ENCODE measurements at regions of chr9 and their contacts with region 1.

Region 1: DNA sequence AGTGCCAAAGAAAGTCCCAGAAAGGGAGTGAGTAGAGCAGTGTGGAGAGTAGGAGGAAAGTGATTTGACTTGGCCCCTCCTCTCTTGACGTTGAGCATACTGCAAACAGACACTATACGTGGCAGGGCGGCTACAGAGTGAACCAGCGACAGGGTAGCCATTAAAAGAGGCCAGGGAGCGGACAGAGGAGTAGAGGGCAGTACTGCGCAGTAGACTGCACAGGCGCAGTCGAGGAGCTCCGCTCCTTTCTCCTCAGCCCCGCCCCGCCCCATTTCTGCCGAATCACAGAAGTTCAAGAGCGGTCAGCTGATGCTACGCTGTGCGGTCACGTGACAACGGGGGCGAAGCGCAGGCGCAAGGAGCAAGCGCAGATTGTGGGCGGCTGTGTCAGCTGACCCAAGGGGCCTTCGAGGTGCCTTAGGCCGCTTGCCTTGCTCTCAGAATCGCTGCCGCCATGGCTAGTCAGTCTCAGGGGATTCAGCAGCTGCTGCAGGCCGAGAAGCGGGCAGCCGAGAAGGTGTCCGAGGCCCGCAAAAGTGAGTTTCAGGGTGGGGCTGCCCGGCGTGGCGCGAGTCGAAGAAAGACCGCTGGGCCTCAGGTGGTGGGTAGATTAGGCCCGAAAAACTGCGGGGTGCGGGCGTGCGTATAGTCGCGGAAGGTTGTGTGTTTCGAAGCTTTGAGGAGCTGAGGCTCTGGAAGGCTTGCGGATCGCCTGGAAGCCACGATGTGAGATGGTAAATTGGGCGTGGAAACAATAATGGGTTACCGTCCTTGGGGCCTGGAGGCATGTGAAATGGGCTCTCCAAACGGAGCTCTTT is at the start of gene ATP6V1G1:
- DNase-seq: peak; percentile 96
- ATAC-seq: peak; percentile 93
- H3K4me3 Mint-ChIP-seq: peak within 1 kb of the TSS; percentile 99
- H3K27ac Mint-ChIP-seq: peak within 1 kb of the TSS; percentile 99
- H3K4me1 Mint-ChIP-seq: peaks cover 53% of the 10 kb centered on the region
- H3K27me3 Mint-ChIP-seq: no peaks in the 10 kb centered on the region
- CTCF ChIP-seq: no peak
- total RNA-seq, gene ATP6V1G1: 68.4 and 70.2 TPM in 2 replicates

Region 2: DNA sequence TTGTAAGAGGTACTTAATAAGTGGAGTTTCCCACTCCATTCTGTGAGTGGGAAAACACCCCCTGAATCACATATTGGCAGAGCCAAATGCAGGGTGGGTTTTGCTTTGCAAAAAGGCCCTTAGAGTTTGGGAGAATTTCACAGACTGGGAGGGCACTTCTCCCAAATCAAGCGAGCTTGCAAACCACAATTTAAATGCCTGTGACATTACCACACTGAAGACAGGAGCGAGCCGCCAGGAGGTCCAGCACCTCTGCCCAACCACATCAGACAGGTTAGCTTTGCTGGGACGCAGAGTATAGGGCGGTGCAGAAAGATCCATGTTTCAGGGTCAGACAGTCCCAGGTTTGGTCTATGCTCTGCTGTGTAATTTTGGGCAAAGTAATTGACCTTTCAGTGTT is 1188.8 kb before region 1 on chr9:
- CTCF ChIA-PET with region 1: no interaction called
- POLR2A ChIA-PET with region 1: no interaction called
- intact Hi-C with region 1: no loop called
- DNase-seq: no peak
- ATAC-seq: no peak
- H3K4me3 Mint-ChIP-seq: no peak overlapping the region
- H3K27ac Mint-ChIP-seq: no peak overlapping the region
- H3K4me1 Mint-ChIP-seq: peaks cover 17% of the 10 kb centered on the region
- H3K27me3 Mint-ChIP-seq: no peaks in the 10 kb centered on the region
- CTCF ChIP-seq: no peak

Region 3: GRCh38 chr9:114405294-114406034 is 182.1 kb before region 1 on chr9:
- CTCF ChIA-PET with region 1: interaction called, 21 read pairs
- POLR2A ChIA-PET with region 1: interaction called, 5 read pairs
- intact Hi-C with region 1: loop called (anchors 1 kb)
- DNase-seq: peak; percentile 62
- ATAC-seq: peak; percentile 99
- H3K4me3 Mint-ChIP-seq: no peak overlapping the region
- H3K27ac Mint-ChIP-seq: no peak overlapping the region
- H3K4me1 Mint-ChIP-seq: peaks cover 6% of the 10 kb centered on the region
- H3K27me3 Mint-ChIP-seq: no peaks in the 10 kb centered on the region
- CTCF ChIP-seq: peak; percentile 29

Region 4: DNA sequence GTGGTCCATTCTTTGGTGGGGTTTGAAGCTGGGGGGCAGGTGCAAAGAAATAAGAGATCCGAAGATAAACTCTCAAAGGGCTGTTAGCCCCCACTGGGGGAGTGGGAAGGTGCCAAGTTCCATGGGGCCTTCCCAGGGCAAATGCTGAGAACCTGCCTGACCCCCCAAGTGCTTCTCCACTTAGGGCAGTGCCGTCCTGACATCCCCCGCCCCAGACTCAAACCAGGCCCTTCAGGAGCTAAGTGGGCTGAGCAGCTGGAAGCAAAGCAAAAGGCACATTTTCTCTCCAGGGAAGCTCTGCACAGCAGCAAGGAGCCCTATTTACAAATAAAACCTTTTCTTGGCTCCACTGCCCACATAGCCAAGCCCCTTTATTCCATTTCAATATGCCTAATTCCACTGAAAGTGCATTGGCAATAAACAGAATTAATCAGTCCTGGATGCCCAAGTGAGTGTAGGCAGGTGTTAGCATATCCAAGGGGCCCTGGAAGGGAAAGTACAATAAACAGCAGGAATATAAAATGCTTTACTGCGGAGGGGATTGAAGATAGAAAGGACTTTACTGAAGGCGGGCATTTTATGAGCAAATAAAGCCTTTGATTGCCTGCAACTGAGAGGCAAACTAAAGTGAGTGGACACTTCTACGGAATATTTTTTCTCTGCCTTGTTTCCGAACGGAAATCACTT is 126.9 kb before region 1 on chr9:
- CTCF ChIA-PET with region 1: no interaction called
- POLR2A ChIA-PET with region 1: no interaction called
- intact Hi-C with region 1: no loop called
- DNase-seq: no peak
- ATAC-seq: no peak
- H3K4me3 Mint-ChIP-seq: no peak overlapping the region
- H3K27ac Mint-ChIP-seq: no peak overlapping the region
- H3K4me1 Mint-ChIP-seq: peaks cover 15% of the 10 kb centered on the region
- H3K27me3 Mint-ChIP-seq: no peaks in the 10 kb centered on the region
- CTCF ChIP-seq: no peak

Region 5: GRCh38 chr9:114487607-114488300 is 99.8 kb before region 1 on chr9:
- CTCF ChIA-PET with region 1: interaction called, 3 read pairs
- POLR2A ChIA-PET with region 1: interaction called, 3 read pairs
- intact Hi-C with region 1: loop called (anchors 1 kb)
- DNase-seq: no peak
- ATAC-seq: peak; percentile 85
- H3K4me3 Mint-ChIP-seq: no peak overlapping the region
- H3K27ac Mint-ChIP-seq: no peak overlapping the region
- H3K4me1 Mint-ChIP-seq: peaks cover 39% of the 10 kb centered on the region
- H3K27me3 Mint-ChIP-seq: no peaks in the 10 kb centered on the region
- CTCF ChIP-seq: peak; percentile 41

Region 6: DNA sequence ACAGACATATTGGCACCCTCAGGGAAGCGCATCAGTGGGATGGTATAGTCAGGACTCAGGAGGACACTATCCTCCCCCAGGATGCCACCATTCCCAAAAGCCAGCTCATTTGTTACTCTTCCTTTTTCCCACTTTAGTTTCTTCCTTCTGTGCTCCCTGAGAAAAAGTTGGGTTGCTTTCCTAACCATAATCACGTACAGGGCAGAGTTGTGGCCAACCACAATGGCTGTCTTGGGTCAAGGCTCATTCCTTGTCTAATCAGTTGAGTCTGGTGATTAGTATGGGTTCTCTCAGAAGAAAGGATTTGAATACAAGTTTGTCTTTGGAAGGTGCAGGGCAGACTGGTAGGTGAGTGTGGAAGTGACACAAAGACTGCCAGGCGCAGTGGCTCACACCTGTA is 26.6 kb before region 1 on chr9:
- CTCF ChIA-PET with region 1: interaction called, 5 read pairs
- POLR2A ChIA-PET with region 1: interaction called, 30 read pairs
- intact Hi-C with region 1: loop called (anchors 1 kb)
- DNase-seq: no peak
- ATAC-seq: no peak
- H3K4me3 Mint-ChIP-seq: no peak overlapping the region
- H3K27ac Mint-ChIP-seq: no peak overlapping the region
- H3K4me1 Mint-ChIP-seq: peaks cover 51% of the 10 kb centered on the region
- H3K27me3 Mint-ChIP-seq: no peaks in the 10 kb centered on the region
- CTCF ChIP-seq: no peak

Region 7: DNA sequence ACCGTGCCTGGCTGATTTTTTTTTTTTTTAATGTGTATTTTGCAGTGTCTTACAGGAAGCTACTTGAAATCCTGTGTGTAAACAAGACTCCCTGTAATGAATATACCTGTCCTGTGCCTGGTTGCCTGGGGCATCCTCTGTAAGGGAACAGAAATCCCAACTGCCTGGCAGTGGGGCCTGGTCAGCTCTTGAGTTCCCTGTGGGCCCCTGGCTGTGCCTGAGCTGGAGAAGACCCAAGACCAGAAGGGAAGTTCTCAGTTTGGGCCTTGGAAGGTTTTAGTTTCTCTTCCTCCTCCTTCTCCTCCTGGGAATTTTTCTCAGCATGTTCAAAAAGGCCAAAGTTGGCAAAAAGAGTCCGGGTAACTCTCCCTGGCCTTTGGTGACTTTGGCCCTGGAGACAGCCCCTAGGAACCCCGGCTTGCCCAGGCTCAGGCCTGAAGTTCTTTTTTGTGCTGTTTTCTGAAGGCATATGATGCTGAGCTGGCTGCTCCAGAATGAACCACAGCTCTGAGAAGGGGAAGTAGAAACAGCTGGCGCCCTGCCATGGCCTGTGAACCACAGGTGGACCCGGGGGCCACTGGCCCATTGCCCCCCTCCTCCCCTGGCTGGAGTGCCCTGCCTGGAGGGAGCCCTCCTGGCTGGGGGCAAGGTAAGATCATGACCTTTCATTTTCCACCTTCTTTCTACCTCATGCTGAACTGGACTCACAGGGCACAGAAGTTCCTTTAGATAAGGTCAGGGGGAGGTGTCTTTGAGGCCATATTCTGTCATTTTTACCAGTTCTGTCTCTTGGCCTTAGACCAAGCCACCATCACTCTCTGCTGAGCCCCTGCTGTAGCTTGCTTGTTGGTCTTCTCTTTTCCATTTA is 29.3 kb after region 1 on chr9:
- CTCF ChIA-PET with region 1: interaction called, 21 read pairs
- POLR2A ChIA-PET with region 1: interaction called, 161 read pairs
- intact Hi-C with region 1: loop called (anchors 1 kb)
- DNase-seq: peak; percentile 73
- ATAC-seq: peak; percentile 76
- H3K4me3 Mint-ChIP-seq: peak overlapping the region; percentile 74
- H3K27ac Mint-ChIP-seq: peak overlapping the region; percentile 98
- H3K4me1 Mint-ChIP-seq: peaks cover 83% of the 10 kb centered on the region
- H3K27me3 Mint-ChIP-seq: no peaks in the 10 kb centered on the region
- CTCF ChIP-seq: no peak

Region 8: GRCh38 chr9:114836769-114837168 is 249.2 kb after region 1 on chr9:
- CTCF ChIA-PET with region 1: no interaction called
- POLR2A ChIA-PET with region 1: no interaction called
- intact Hi-C with region 1: no loop called
- DNase-seq: no peak
- ATAC-seq: no peak
- H3K4me3 Mint-ChIP-seq: no peak overlapping the region
- H3K27ac Mint-ChIP-seq: no peak overlapping the region
- H3K4me1 Mint-ChIP-seq: no peaks in the 10 kb centered on the region
- H3K27me3 Mint-ChIP-seq: peaks cover 33% of the 10 kb centered on the region
- CTCF ChIP-seq: no peak

Region 9: DNA sequence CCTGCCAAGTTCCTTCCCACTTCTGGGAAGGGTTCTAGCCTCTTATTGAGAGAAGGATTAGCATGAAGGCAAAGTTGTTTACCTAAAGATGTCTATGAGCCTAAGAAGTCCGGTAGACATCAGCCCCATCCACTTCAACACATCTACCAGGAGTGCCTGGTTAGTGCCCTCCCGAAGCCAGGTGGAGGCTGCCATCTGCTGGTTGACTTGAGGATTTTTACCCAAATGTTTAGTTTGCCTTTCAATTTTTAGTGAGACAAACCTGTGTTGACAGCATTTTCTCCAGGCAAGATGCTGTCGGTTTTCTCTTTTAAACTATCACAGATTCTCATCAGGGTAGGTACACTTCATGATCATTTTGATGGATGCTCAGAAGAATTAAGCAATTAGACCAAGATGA is 426.4 kb after region 1 on chr9:
- CTCF ChIA-PET with region 1: no interaction called
- POLR2A ChIA-PET with region 1: no interaction called
- intact Hi-C with region 1: loop called (anchors 1 kb)
- DNase-seq: peak; percentile 46
- ATAC-seq: peak; percentile 79
- H3K4me3 Mint-ChIP-seq: no peak overlapping the region
- H3K27ac Mint-ChIP-seq: no peak overlapping the region
- H3K4me1 Mint-ChIP-seq: peaks cover 5% of the 10 kb centered on the region
- H3K27me3 Mint-ChIP-seq: peaks cover 8% of the 10 kb centered on the region
- CTCF ChIP-seq: no peak

Measured in activated B cell treated with CpG ODN at 0.5 μM for 24 hours (primary cell).